Dendritic cell treated with granulocyte-macrophage colony-stimulating factor and Interleukin-4, amounts not matched to agents 40 ng/mL and 50 ng/mL, for 4 days (primary cell): ENCODE measurements at regions of chr19 and their contacts with region 1.

Region 1: GRCh38 chr19:17873786-17874757 is 2.3 kb downstream of the SLC5A5 start:
- H3K4me3 Mint-ChIP-seq: peak overlapping the region; percentile 33
- H3K27ac Mint-ChIP-seq: no peak overlapping the region
- H3K4me1 Mint-ChIP-seq: peaks cover 23% of the 10 kb centered on the region
- H3K27me3 Mint-ChIP-seq: peaks cover 59% of the 10 kb centered on the region

Region 2: GRCh38 chr19:17915951-17916593 is 42.0 kb after region 1 on chr19:
- intact Hi-C with region 1: no loop called
- H3K4me3 Mint-ChIP-seq: no peak overlapping the region
- H3K27ac Mint-ChIP-seq: no peak overlapping the region
- H3K4me1 Mint-ChIP-seq: no peaks in the 10 kb centered on the region
- H3K27me3 Mint-ChIP-seq: peaks cover 23% of the 10 kb centered on the region

Region 3: DNA sequence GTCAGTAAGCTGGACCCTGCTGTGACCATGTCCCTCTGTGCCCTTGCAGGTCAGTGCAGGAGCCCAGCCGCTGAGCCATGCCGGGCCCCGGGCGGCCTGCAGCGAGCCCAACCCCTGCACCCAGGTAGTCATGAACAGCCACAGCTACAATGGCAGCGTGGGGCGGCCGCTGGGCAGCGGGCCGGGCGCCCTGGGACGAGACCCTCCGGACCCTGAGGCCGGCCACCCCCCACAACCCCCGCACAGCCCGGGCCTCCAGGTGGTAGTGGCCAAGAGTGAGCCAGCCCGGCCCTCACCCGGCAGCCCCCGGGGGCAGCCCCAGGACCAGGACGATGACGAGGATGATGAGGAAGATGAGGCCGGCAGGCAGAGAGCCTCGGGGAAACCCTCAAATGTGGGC is 99.7 kb after region 1 on chr19:
- intact Hi-C with region 1: loop called (anchors 10 kb)
- H3K4me3 Mint-ChIP-seq: no peak overlapping the region
- H3K27ac Mint-ChIP-seq: no peak overlapping the region
- H3K4me1 Mint-ChIP-seq: peaks cover 13% of the 10 kb centered on the region
- H3K27me3 Mint-ChIP-seq: peaks cover 16% of the 10 kb centered on the region

Region 4: GRCh38 chr19:18007044-18007916 is 133.2 kb after region 1 on chr19:
- intact Hi-C with region 1: no loop called
- H3K4me3 Mint-ChIP-seq: peak overlapping the region; percentile 89
- H3K27ac Mint-ChIP-seq: peak overlapping the region; percentile 80
- H3K4me1 Mint-ChIP-seq: peaks cover 43% of the 10 kb centered on the region
- H3K27me3 Mint-ChIP-seq: no peaks in the 10 kb centered on the region